CD4-positive, alpha-beta T cell (primary cell): ENCODE measurements at regions of chr14 and their contacts with region 1.

Region 1: DNA sequence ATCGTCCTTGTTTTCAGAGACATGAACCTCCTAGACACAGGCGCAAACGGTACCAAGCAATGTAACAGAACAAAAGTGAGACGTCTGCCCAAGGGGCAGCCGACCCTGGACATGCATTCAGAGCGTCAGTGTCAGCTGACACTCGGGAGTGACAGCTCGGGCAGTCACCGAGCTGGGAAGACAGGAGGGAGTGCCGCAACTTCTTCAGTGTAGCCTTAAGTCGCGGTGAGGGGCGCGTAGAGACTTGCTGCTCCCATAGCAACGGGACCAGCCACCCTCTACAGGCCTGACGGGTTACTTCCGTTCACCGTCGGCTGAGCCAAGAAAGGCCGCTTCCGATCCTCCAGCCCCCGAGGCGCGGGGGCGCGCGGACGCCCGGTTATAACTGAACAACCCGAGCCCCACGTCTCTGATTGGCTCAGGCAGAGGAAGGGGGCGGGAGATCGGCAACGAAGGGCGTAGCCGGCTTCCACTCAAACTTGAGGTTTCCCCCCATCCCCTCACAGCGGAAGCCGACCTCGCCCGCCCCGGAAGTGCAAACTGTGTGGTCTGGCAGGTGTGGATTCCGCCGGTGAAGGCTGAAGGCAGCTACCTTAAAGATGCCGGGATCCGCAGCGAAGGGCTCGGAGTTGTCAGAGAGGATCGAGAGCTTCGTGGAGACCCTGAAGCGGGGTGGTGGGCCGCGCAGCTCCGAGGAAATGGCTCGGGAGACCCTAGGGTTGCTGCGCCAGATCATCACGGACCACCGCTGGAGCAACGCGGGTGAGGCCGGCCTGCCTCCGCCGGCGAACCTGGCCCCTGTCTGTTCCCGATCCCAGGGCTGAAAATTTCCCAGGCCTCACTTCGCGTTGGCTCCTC is at the start of gene EIF2B2:
- DNase-seq: peak; percentile 97 to 100 (median 98)
- ATAC-seq: peak; percentile 96
- H3K4me3 ChIP-seq: peak within 1 kb of the TSS; percentile 73
- H3K4me3 Mint-ChIP-seq: peak within 1 kb of the TSS; percentile 99
- H3K27ac ChIP-seq: peak within 1 kb of the TSS; percentile 83 to 96
- H3K27ac Mint-ChIP-seq: peak within 1 kb of the TSS; percentile 93
- H3K4me1 ChIP-seq: peaks cover 28% of the 10 kb centered on the region
- H3K4me1 Mint-ChIP-seq: peaks cover 51% of the 10 kb centered on the region
- H3K27me3 ChIP-seq: no peaks in the 10 kb centered on the region
- H3K27me3 Mint-ChIP-seq: no peaks in the 10 kb centered on the region
- CTCF ChIP-seq: no peak
- total RNA-seq, gene EIF2B2: 21.0 to 24.2 TPM

Region 2: GRCh38 chr14:74712499-74713394 is 289.9 kb before region 1 on chr14 and contains the starts of genes AREL1 and FCF1:
- CTCF ChIA-PET with region 1: no interaction called
- POLR2A ChIA-PET with region 1: no interaction called
- intact Hi-C with region 1: loop called in 1 of 2 experiments (anchors 2 kb)
- DNase-seq: peak; percentile 62 to 93 (median 70)
- ATAC-seq: peak; percentile 92
- H3K4me3 ChIP-seq: peak within 1 kb of the TSS; percentile 76
- H3K4me3 Mint-ChIP-seq: peak within 1 kb of the TSS; percentile 90
- H3K27ac ChIP-seq: peak within 1 kb of the TSS; percentile 76 to 81
- H3K27ac Mint-ChIP-seq: peak within 1 kb of the TSS; percentile 92
- H3K4me1 ChIP-seq: peaks cover 12% of the 10 kb centered on the region
- H3K4me1 Mint-ChIP-seq: peaks cover 65% of the 10 kb centered on the region
- H3K27me3 ChIP-seq: no peaks in the 10 kb centered on the region
- H3K27me3 Mint-ChIP-seq: no peaks in the 10 kb centered on the region
- CTCF ChIP-seq: no peak
- total RNA-seq, gene AREL1: 30.6 to 35.9 TPM
- total RNA-seq, gene FCF1: 31.9 to 32.9 TPM

Region 3: DNA sequence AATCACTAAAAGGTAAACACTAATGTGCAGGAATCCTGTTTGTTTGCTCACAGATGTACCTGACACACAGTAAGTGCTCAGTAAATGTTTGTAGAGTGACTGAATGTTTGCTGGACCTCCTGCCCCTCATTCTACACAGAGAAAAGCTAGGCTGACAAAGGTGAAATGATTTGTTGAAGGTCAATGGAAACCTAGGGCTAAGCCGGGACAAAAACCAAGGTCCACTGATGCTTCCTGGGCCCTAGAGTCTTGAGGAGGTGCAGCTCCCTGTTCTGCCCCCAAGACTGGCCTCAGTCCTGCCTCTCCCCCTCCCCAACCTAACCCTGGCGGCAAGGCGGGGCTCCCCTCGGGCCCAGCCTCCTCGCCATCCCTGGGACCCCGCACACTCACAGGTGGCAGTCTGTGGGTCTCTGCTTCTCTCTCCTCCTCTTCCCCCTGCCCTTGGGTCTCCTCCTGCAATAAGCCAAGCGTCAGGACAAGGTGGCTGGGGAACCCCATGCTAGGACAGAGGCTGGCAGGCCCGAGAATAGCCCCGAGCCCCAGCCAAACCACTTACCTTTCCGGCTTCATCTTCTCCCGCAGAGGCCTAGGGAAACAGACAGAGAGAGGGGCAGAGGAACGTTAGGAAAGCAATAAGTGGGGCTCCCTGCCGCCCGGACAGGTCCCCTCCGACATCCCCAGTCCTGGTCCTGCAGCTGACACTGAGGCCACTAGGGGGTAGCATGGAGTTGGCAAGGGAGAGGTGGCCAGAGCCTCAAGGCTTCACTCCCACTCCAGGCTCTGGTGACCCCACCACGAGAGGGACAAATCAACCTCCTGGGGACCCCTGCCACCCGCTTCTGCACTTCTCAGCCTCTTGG is 56.6 kb before region 1 on chr14:
- CTCF ChIA-PET with region 1: no interaction called
- POLR2A ChIA-PET with region 1: no interaction called
- intact Hi-C with region 1: loop called (anchors 2 to 5 kb)
- DNase-seq: peak; percentile 57 to 84 (median 68)
- ATAC-seq: peak; percentile 71
- H3K4me3 ChIP-seq: no peak overlapping the region
- H3K4me3 Mint-ChIP-seq: peak overlapping the region; percentile 46
- H3K27ac ChIP-seq: no peak overlapping the region
- H3K27ac Mint-ChIP-seq: peak overlapping the region; percentile 52
- H3K4me1 ChIP-seq: peaks cover 32% of the 10 kb centered on the region
- H3K4me1 Mint-ChIP-seq: peaks cover 33% of the 10 kb centered on the region
- H3K27me3 ChIP-seq: no peaks in the 10 kb centered on the region
- H3K27me3 Mint-ChIP-seq: peaks cover 7% of the 10 kb centered on the region
- CTCF ChIP-seq: peak; percentile 92

Region 4: DNA sequence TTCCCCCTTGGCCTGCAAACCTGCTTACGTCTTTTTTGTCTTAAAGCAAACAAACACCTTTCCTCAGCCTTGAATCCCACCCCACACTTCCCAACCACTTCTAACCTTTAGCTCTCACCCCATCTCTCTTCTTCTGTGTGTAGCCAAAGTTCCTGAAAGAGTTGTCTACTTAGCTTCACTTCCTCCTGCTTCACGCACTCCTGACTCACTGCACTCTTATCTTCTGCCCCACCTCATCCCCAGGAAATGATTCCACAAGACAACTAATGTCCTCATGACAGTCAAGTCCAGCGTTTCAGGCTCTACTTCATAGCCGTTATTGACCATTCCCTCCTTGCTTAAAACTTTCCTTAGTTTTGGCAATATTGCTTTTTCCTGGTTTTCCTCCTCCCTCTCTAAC is 22.5 kb after region 1 on chr14:
- CTCF ChIA-PET with region 1: no interaction called
- POLR2A ChIA-PET with region 1: interaction called, 10 read pairs
- intact Hi-C with region 1: no loop called
- DNase-seq: peak in 2 of 14 experiments; percentile 33 to 51
- ATAC-seq: no peak
- H3K4me3 ChIP-seq: no peak overlapping the region
- H3K4me3 Mint-ChIP-seq: no peak overlapping the region
- H3K27ac ChIP-seq: no peak overlapping the region
- H3K27ac Mint-ChIP-seq: no peak overlapping the region
- H3K4me1 ChIP-seq: no peaks in the 10 kb centered on the region
- H3K4me1 Mint-ChIP-seq: no peaks in the 10 kb centered on the region
- H3K27me3 ChIP-seq: no peaks in the 10 kb centered on the region
- H3K27me3 Mint-ChIP-seq: no peaks in the 10 kb centered on the region
- CTCF ChIP-seq: no peak

Region 5: DNA sequence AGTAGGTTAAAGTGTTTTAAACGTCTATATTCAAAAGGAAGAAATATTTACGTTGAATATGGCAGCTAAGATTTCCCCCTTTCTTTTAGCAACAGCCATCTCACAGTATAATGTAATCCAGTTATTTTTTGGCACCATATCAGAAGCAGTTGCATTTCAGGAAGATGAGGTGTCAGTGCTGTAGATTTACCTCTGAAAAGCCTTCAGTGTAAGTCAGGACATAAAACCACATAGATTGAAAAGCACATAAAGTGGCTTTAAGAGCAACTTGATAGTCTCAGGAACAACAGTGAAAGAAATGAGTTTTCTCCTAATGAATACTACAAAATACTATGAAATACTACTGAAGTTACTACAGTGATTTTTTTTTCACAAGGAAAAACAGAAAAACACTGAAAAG is 41.7 kb after region 1 on chr14:
- CTCF ChIA-PET with region 1: no interaction called
- POLR2A ChIA-PET with region 1: no interaction called
- intact Hi-C with region 1: loop called in 1 of 2 experiments (anchors 2 kb)
- DNase-seq: no peak
- ATAC-seq: no peak
- H3K4me3 ChIP-seq: no peak overlapping the region
- H3K4me3 Mint-ChIP-seq: peak overlapping the region; percentile 38
- H3K27ac ChIP-seq: no peak overlapping the region
- H3K27ac Mint-ChIP-seq: no peak overlapping the region
- H3K4me1 ChIP-seq: peaks cover 2% of the 10 kb centered on the region
- H3K4me1 Mint-ChIP-seq: peaks cover 65% of the 10 kb centered on the region
- H3K27me3 ChIP-seq: no peaks in the 10 kb centered on the region
- H3K27me3 Mint-ChIP-seq: no peaks in the 10 kb centered on the region
- CTCF ChIP-seq: no peak

Region 6: DNA sequence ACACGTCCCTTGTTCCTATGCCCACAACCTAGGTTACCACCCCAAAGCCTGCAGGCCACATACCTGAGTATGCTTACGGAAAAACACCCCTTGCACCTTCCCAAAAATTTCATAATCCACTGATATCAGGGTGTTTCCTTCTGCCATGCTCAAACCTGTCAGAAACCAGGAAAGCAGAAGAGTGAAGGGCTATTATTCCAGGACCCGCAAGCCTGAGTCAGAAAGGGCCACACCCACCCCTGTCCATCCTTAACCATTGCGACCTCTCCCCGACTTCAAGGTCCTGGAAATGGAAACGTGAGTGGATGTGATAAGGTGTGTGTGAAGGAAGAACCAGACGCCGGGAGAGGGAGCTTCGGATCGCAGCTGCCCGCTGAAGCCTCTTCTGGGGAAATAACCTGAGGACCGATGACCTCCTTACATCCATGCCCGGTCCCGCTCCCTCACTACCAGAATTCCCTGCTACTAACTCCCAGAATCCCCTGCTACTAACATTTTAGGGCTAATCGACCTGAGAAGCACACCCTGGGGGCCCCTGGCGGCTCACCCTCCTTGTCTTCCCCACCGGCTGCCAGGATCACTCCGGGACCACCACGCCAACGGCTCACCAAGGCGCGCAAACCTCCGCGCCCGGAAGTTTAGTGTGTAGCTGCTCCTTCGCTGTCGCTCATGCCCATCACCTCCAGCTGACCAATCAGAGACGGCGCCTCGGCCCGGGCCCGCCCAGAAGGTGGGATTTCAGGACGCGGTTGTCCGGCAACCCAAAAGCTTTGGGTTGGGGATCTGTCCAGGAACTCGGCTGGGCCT is 61.0 kb after region 1 on chr14 and contains the start of gene ACYP1:
- CTCF ChIA-PET with region 1: interaction called, 4 read pairs
- POLR2A ChIA-PET with region 1: interaction called, 11 read pairs
- intact Hi-C with region 1: loop called in 1 of 2 experiments (anchors 10 kb)
- DNase-seq: peak; percentile 81 to 93 (median 87)
- ATAC-seq: peak; percentile 99
- H3K4me3 ChIP-seq: peak within 1 kb of the TSS; percentile 88
- H3K4me3 Mint-ChIP-seq: peak within 1 kb of the TSS; percentile 98
- H3K27ac ChIP-seq: peak within 1 kb of the TSS; percentile 59 to 78
- H3K27ac Mint-ChIP-seq: peak within 1 kb of the TSS; percentile 93
- H3K4me1 ChIP-seq: peaks cover 22% of the 10 kb centered on the region
- H3K4me1 Mint-ChIP-seq: peaks cover 46% of the 10 kb centered on the region
- H3K27me3 ChIP-seq: no peaks in the 10 kb centered on the region
- H3K27me3 Mint-ChIP-seq: no peaks in the 10 kb centered on the region
- CTCF ChIP-seq: no peak
- total RNA-seq, gene ACYP1: 7.9 to 9.4 TPM

Region 7: GRCh38 chr14:75126679-75127473 is 124.3 kb after region 1 on chr14 and contains the start of gene NEK9:
- CTCF ChIA-PET with region 1: no interaction called
- POLR2A ChIA-PET with region 1: interaction called, 11 read pairs
- intact Hi-C with region 1: loop called in 1 of 2 experiments (anchors 5 kb)
- DNase-seq: peak; percentile 82 to 93 (median 87)
- ATAC-seq: peak; percentile 82
- H3K4me3 ChIP-seq: peak within 1 kb of the TSS; percentile 92
- H3K4me3 Mint-ChIP-seq: peak within 1 kb of the TSS; percentile 99
- H3K27ac ChIP-seq: peak within 1 kb of the TSS; percentile 89 to 93
- H3K27ac Mint-ChIP-seq: peak within 1 kb of the TSS; percentile 90
- H3K4me1 ChIP-seq: peaks cover 36% of the 10 kb centered on the region
- H3K4me1 Mint-ChIP-seq: peaks cover 44% of the 10 kb centered on the region
- H3K27me3 ChIP-seq: no peaks in the 10 kb centered on the region
- H3K27me3 Mint-ChIP-seq: no peaks in the 10 kb centered on the region
- CTCF ChIP-seq: no peak
- total RNA-seq, gene NEK9: 53.5 to 54.1 TPM

Region 8: GRCh38 chr14:75307700-75308379 is 305.2 kb after region 1 on chr14:
- CTCF ChIA-PET with region 1: no interaction called
- POLR2A ChIA-PET with region 1: no interaction called
- intact Hi-C with region 1: no loop called
- DNase-seq: peak; percentile 56 to 87 (median 65)
- ATAC-seq: peak; percentile 64
- H3K4me3 ChIP-seq: no peak overlapping the region
- H3K4me3 Mint-ChIP-seq: no peak overlapping the region
- H3K27ac ChIP-seq: no peak overlapping the region
- H3K27ac Mint-ChIP-seq: no peak overlapping the region
- H3K4me1 ChIP-seq: peaks cover 13% of the 10 kb centered on the region
- H3K4me1 Mint-ChIP-seq: peaks cover 10% of the 10 kb centered on the region
- H3K27me3 ChIP-seq: no peaks in the 10 kb centered on the region
- H3K27me3 Mint-ChIP-seq: no peaks in the 10 kb centered on the region
- CTCF ChIP-seq: peak; percentile 95